ENCODE measurements at regions of chr11 and their contacts with region 1.

Region 1: GRCh38 chr11:45332276-45332934 is 46.3 kb upstream of the SYT13 start:
- DNase-seq: no peak

Region 2: DNA sequence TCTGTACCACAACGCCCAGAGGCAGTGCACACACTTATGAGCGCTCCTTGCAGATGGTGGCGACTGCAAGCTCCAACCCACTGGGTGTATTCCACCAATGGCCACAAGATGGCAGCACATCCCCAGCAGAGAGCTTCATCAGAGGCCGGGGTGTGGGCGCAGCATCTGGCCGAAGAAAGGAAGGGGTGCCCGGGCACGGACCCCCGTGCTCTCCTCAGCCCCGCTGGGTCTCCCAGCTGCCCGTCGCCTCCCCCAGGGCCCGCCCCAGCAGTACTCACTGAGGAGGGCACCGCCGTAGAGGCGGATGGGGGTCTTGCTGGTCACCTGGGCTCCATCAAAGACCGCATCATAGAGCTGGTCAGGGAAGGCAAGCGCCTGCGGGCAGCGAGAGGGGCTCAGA is 395.9 kb before region 1 on chr11:
- intact Hi-C with region 1: loop called (anchors 5 kb)
- DNase-seq: peak; percentile 91

Region 3: DNA sequence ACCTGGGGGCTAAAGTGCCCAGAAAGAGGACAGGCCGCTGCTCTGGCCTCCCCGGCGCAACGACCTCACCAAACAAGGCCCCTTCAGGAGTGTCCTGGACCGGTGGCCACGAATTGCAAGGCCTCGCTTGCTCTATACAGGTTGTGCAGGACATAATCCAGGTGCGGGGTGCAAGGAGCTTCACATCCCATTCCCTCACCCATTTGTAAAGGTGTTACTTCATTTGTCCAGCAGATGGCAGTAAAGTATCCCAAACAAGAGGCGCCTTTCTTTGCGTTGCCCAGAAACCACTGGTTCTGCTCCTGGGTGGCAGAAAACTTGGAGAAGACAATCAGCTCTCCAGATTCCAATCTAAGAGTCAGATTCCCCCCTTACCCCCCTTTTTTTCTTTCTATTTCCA is 221.8 kb before region 1 on chr11:
- intact Hi-C with region 1: loop called (anchors 1 kb)
- DNase-seq: no peak

Region 4: DNA sequence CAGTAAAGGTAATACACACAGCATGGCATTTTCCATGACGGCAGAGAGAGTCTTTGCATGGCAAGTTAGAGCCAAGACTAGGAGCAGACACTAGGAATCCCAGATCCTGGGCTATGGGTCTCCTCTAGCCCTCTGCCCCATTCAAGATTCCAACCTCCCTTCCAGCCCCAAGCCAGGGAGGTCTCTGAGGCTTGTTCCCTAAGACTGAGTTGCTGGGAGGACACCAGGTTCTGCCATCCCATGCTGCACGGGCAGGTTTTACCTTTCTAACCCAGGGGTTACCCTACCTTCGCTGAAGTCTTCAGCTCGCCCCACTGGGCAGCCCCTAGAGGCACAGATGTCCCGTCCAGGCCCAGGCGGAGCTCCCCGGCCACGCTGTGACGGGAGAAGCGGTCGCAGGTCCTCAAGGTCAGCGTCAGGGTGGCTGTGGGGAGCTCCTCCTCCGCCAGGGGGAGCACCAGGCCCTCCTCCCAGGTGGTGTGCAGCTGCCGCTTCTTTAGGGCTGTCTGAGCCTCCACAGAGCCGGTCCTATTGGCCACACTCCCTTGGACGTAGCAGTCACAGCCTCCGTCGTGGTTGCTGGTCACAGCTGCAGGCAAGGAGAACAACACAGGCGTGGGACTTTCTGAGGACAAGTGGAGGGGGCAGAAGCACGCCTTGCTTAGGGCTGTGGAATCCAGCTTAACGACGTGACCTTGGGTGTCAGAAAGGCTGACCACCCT is 80.1 kb before region 1 on chr11:
- intact Hi-C with region 1: no loop called
- DNase-seq: no peak

Region 5: GRCh38 chr11:45289369-45289768 is 43.0 kb before region 1 on chr11:
- intact Hi-C with region 1: loop called (anchors 1 kb)
- DNase-seq: no peak

Region 6: DNA sequence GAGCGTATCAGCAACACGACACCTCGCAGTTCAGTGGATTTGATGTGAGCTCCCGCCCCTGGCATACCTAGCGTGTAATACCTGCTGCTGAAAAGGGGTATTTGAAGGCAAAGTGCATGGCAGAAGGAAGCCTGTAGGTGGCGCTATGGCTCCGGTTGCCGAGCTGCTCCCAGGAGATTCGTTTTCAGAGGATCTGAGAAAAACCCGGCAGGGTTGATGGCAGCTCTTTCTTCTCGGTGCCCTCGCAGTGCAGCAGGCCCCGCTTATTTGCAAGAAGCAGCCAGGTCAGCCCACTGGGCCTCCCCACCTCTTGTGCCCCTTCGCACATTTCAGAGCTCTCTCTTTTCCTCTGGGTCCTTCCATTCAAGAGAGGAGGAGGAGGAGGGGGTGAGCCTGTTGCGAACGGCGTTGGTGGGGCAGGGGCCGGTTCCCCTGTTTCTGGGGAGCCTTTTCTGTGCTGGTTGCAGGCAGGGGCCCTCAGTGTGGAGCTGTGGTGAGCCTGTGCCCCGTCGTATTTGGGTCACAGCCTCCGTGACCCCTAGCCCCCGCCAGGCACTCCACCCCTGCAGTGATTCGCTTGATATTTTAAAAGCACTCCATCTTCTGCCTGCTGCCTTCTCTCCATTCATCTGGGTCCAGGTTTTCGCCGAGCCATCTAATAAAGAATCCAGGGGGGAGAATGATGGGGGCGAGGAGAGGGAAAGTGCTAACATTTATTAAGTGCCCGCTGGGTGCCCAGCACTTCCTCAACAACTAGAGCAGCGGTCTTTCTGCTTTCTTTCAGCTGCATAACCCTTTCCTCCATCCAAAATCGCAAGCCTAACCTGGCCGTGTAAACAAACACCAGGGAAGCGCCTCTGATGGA is 39.1 kb after region 1 on chr11:
- intact Hi-C with region 1: no loop called
- DNase-seq: no peak